ENCODE measurements at regions of chr14 and their contacts with region 1.

Region 1: DNA sequence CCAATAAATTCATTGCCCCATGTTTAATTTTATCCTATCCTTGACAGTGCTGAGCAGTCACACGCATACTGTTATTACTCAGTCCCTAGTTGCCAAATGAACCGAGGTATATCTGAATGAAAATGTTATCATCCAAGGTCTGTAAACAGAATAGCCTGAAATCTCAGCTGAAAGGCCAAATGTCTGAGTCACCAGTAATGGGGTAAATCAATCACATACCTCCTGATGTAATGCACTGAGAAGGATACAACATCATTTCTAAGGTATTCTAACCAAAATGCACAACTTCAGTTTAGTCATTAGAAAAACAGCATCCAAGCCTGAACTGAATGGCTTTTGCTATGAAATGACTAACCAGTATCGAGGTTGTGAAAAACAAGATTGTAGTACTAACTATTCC is 228.6 kb downstream of the DPF3 start:
- DNase-seq: no peak
- H3K4me3 Mint-ChIP-seq: no peak overlapping the region
- H3K27ac Mint-ChIP-seq: no peak overlapping the region
- H3K4me1 Mint-ChIP-seq: peaks cover 8% of the 10 kb centered on the region
- H3K27me3 Mint-ChIP-seq: no peaks in the 10 kb centered on the region

Region 2: DNA sequence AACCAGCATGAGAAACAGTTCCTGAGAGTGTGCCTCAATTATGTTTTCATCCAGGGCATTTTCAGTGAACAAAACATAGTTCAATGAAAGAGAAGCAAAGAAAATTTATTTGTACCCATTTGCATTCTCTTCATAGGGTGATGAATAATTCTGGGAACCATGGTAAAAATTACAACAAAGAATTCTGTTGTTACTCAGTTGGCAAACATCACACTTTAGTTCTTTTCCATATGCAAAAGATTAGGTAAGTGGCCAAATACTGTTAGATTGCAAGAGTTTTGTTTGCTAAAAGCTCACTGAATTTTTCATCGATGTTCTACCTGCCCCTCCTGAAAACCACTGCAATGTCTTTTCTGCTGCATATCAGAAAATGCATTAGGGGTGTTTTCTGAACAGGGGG is 865.4 kb before region 1 on chr14:
- CTCF ChIA-PET with region 1: no interaction called
- POLR2A ChIA-PET with region 1: no interaction called
- intact Hi-C with region 1: no loop called
- DNase-seq: no peak
- H3K4me3 Mint-ChIP-seq: no peak overlapping the region
- H3K27ac Mint-ChIP-seq: no peak overlapping the region
- H3K4me1 Mint-ChIP-seq: no peaks in the 10 kb centered on the region
- H3K27me3 Mint-ChIP-seq: peaks cover 23% of the 10 kb centered on the region

Region 3: GRCh38 chr14:72420725-72421474 is 244.4 kb before region 1 on chr14:
- CTCF ChIA-PET with region 1: no interaction called
- POLR2A ChIA-PET with region 1: no interaction called
- intact Hi-C with region 1: no loop called
- DNase-seq: peak; percentile 86
- H3K4me3 Mint-ChIP-seq: no peak overlapping the region
- H3K27ac Mint-ChIP-seq: no peak overlapping the region
- H3K4me1 Mint-ChIP-seq: peaks cover 4% of the 10 kb centered on the region
- H3K27me3 Mint-ChIP-seq: peaks cover 9% of the 10 kb centered on the region

Region 4: DNA sequence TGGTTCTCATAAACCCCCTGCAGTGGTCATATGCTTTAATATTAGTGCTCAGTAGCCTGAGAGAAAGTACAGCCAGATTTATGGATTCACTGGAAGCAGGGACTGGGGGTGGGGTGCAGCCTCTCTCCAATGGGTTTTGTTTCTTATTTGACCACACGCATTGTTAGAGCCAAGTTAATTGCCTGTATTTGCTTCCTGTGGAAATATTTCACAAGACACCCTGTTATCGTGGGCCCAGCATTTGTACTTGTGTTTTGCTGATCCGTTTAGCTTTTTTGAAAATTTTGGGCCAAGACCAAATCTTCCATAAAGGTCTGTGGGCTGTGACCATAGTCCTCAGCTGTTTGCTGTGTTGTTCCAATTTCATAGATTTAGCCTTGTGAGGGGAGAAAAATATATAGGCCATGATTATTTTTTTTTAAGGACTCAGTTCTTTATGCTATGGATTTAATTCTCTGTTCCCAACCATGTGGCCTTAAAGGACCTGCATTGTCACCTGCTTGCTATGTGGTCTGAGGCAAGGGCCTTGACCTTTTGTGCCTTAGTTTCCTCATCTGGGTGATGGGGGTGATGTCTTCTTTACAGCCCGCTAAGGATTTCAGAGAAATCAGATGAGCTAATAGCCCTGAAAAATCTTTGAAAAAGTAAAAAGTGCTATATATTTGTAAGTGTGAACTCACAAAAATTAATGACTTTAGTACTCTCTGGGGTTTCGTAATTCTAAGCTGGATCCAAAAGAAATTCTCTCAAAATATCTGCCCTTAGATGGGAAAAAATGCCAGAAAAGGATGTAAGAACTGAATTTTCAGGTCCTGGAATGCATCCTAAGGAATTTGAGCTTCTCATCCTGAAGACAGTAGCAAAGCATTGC is 141.6 kb before region 1 on chr14:
- CTCF ChIA-PET with region 1: no interaction called
- POLR2A ChIA-PET with region 1: no interaction called
- intact Hi-C with region 1: loop called (anchors 5 kb)
- DNase-seq: no peak
- H3K4me3 Mint-ChIP-seq: no peak overlapping the region
- H3K27ac Mint-ChIP-seq: no peak overlapping the region
- H3K4me1 Mint-ChIP-seq: peaks cover 50% of the 10 kb centered on the region
- H3K27me3 Mint-ChIP-seq: no peaks in the 10 kb centered on the region

Region 5: DNA sequence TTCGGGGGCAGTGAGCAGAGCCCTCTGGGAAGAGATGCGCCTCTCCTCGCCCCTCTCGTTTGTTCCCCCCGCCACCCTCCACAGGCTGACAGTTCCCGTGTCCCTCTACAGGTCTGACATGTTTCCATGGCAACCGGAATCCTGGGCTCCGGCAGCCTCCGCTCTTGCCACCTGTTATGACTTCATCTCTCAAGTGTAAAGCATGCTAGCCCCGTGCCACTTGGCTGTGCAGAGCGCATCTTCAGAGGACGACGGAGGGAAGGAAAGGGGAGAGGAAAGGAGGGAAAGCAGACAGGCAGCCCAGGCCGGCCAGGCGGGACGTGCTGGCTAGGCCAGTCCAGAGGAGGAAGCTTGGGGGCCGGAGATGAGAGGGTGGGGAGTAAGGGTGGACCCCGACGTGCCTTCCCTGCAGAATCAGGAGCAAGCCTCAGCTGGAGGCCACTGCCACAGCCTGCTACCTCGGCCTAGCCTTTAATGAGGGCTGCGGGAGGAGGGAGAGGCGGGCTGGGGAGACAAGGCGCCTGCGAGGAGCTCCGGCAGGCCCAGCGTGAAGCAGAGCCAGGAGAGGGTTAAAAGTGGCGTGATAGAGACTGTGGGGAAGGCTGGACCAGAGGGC is 14.4 kb after region 1 on chr14:
- CTCF ChIA-PET with region 1: no interaction called
- POLR2A ChIA-PET with region 1: no interaction called
- intact Hi-C with region 1: no loop called
- DNase-seq: no peak
- H3K4me3 Mint-ChIP-seq: no peak overlapping the region
- H3K27ac Mint-ChIP-seq: no peak overlapping the region
- H3K4me1 Mint-ChIP-seq: no peaks in the 10 kb centered on the region
- H3K27me3 Mint-ChIP-seq: no peaks in the 10 kb centered on the region

Region 6: DNA sequence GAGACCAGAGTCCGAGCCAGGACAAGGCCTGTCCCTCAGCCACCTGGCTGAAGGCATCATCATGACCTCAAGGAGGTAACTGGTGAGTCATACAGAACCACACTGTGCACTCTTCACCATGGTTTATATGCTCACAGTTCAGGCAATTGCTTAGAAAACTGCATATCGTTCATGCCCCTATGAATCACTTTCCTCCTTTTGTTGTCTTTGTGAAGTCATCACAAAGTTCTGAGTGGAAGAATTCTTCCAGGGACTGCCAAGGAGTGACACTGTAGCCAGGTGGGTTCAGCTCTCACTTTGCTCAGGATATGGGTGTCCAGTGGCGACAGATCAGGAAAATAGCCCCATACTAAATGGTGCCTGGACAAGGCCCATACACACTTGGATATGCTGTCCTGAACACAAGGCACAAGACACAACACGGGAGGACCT is 136.1 kb after region 1 on chr14:
- CTCF ChIA-PET with region 1: no interaction called
- POLR2A ChIA-PET with region 1: no interaction called
- intact Hi-C with region 1: no loop called
- DNase-seq: peak; percentile 21
- H3K4me3 Mint-ChIP-seq: no peak overlapping the region
- H3K27ac Mint-ChIP-seq: peak overlapping the region; percentile 55
- H3K4me1 Mint-ChIP-seq: peaks cover 8% of the 10 kb centered on the region
- H3K27me3 Mint-ChIP-seq: no peaks in the 10 kb centered on the region

Measured in activated CD4-positive, alpha-beta memory T cell treated with anti-CD3 and anti-CD28 coated beads for 36 hours (primary cell).